ENCODE measurements at regions of chr1 and their contacts with region 1.

Region 1: GRCh38 chr1:27031235-27032118 is 18.8 kb upstream of the TENT5B start:
- DNase-seq: peak; percentile 89
- H3K4me3 Mint-ChIP-seq: peak overlapping the region; percentile 48
- H3K27ac Mint-ChIP-seq: peak overlapping the region; percentile 85
- H3K4me1 Mint-ChIP-seq: peaks cover 25% of the 10 kb centered on the region
- H3K27me3 Mint-ChIP-seq: no peaks in the 10 kb centered on the region
- CTCF ChIP-seq: no peak

Region 2: DNA sequence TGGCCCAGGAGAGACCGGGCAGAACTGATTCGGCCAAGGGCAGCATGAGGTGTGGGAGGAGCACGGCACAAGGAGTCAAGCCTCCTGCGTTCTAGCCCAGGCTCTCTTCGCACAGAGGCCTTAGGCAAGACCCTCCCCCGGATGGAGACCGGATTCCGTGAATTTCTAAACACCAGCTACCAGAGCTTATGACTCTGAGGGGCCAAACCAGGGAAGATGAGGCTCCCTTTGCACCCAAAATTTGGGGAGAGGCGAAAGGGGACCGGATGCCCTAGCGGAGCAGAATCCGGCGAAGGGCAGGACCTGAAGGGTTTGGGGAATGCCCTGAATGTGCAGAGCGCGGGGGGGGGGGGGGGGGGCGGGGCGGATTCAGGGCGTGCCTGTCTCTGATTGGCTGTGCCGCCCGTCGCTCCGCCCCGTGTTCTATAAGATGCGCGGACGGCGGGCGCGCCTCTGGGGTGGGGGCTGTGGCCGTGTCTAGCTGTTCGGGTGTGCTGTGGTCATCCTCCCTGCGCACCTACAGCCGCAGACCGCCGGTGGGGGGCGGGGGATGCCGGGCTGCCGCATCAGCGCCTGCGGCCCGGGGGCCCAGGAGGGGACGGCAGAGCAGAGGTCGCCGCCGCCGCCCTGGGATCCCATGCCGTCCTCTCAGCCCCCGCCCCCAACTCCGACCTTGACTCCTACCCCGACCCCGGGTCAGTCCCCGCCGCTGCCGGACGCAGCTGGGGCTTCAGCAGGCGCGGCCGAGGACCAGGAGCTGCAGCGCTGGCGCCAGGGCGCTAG is 38.0 kb before region 1 on chr1 and contains the start of gene TRNP1:
- CTCF ChIA-PET with region 1: interaction called, 27 read pairs
- POLR2A ChIA-PET with region 1: interaction called, 71 read pairs
- intact Hi-C with region 1: no loop called
- DNase-seq: peak; percentile 81
- H3K4me3 Mint-ChIP-seq: peak within 1 kb of the TSS; percentile 80
- H3K27ac Mint-ChIP-seq: peak within 1 kb of the TSS; percentile 92
- H3K4me1 Mint-ChIP-seq: peaks cover 45% of the 10 kb centered on the region
- H3K27me3 Mint-ChIP-seq: no peaks in the 10 kb centered on the region
- CTCF ChIP-seq: no peak
- total RNA-seq, gene TRNP1: 56.3 and 59.2 TPM in 2 replicates

Region 3: GRCh38 chr1:26999440-26999987 is 32.0 kb before region 1 on chr1:
- CTCF ChIA-PET with region 1: interaction called, 27 read pairs
- POLR2A ChIA-PET with region 1: interaction called, 71 read pairs
- intact Hi-C with region 1: loop called (anchors 1 kb)
- DNase-seq: peak; percentile 99
- H3K4me3 Mint-ChIP-seq: peak overlapping the region; percentile 80
- H3K27ac Mint-ChIP-seq: peak overlapping the region; percentile 92
- H3K4me1 Mint-ChIP-seq: peaks cover 45% of the 10 kb centered on the region
- H3K27me3 Mint-ChIP-seq: no peaks in the 10 kb centered on the region
- CTCF ChIP-seq: no peak

Region 4: GRCh38 chr1:27241677-27242076 is 210.2 kb after region 1 on chr1:
- CTCF ChIA-PET with region 1: no interaction called
- POLR2A ChIA-PET with region 1: no interaction called
- intact Hi-C with region 1: no loop called
- DNase-seq: no peak
- H3K4me3 Mint-ChIP-seq: no peak overlapping the region
- H3K27ac Mint-ChIP-seq: no peak overlapping the region
- H3K4me1 Mint-ChIP-seq: no peaks in the 10 kb centered on the region
- H3K27me3 Mint-ChIP-seq: no peaks in the 10 kb centered on the region
- CTCF ChIP-seq: no peak